ENCODE measurements at regions of chrX and their contacts with region 1.

Region 1: GRCh38 chrX:148024425-148025148 is 43.5 kb downstream of the FMR1NB start:
- DNase-seq: peak in 1 of 9 experiments; percentile 1
- ATAC-seq: no peak
- H3K4me3 ChIP-seq: no peak overlapping the region
- H3K4me3 Mint-ChIP-seq: no peak overlapping the region
- H3K27ac ChIP-seq: no peak overlapping the region
- H3K27ac Mint-ChIP-seq: no peak overlapping the region
- H3K4me1 ChIP-seq: no peaks in the 10 kb centered on the region
- H3K4me1 Mint-ChIP-seq: peaks cover 2% of the 10 kb centered on the region
- H3K27me3 ChIP-seq: no peaks in the 10 kb centered on the region
- H3K27me3 Mint-ChIP-seq: no peaks in the 10 kb centered on the region
- CTCF ChIP-seq: no peak

Region 2: DNA sequence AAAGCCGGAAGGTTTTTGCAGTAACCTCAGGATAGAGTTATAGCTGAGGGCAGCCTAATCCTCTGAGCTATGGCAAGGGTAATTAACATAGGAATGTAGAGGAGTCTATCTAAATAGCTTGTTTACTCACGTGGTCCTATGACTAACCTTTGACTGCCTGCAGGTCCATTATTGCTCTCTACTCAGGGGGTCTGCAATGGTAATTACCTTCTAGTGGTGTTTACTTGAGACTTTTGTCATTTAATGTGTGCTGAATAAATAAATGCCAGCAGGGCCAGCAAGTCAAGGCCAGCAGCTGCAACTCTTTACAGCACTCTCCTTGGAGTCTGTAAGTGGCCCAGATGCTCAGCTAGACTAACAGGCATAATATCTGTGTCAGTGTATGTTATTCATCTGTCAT is 325.5 kb before region 1 on chrX:
- CTCF ChIA-PET with region 1: no interaction called
- POLR2A ChIA-PET with region 1: no interaction called
- intact Hi-C with region 1: loop called in 1 of 2 experiments (anchors 10 kb)
- DNase-seq: no peak
- ATAC-seq: no peak
- H3K4me3 ChIP-seq: no peak overlapping the region
- H3K4me3 Mint-ChIP-seq: no peak overlapping the region
- H3K27ac ChIP-seq: no peak overlapping the region
- H3K27ac Mint-ChIP-seq: no peak overlapping the region
- H3K4me1 ChIP-seq: no peaks in the 10 kb centered on the region
- H3K4me1 Mint-ChIP-seq: no peaks in the 10 kb centered on the region
- H3K27me3 ChIP-seq: no peaks in the 10 kb centered on the region
- H3K27me3 Mint-ChIP-seq: no peaks in the 10 kb centered on the region
- CTCF ChIP-seq: no peak

Region 3: GRCh38 chrX:148080593-148080992 is 56.0 kb after region 1 on chrX:
- CTCF ChIA-PET with region 1: no interaction called
- POLR2A ChIA-PET with region 1: no interaction called
- intact Hi-C with region 1: loop called in 1 of 2 experiments (anchors 10 kb)
- DNase-seq: no peak
- ATAC-seq: no peak
- H3K4me3 ChIP-seq: no peak overlapping the region
- H3K4me3 Mint-ChIP-seq: no peak overlapping the region
- H3K27ac ChIP-seq: no peak overlapping the region
- H3K27ac Mint-ChIP-seq: no peak overlapping the region
- H3K4me1 ChIP-seq: no peaks in the 10 kb centered on the region
- H3K4me1 Mint-ChIP-seq: no peaks in the 10 kb centered on the region
- H3K27me3 ChIP-seq: no peaks in the 10 kb centered on the region
- H3K27me3 Mint-ChIP-seq: no peaks in the 10 kb centered on the region
- CTCF ChIP-seq: no peak

Region 4: DNA sequence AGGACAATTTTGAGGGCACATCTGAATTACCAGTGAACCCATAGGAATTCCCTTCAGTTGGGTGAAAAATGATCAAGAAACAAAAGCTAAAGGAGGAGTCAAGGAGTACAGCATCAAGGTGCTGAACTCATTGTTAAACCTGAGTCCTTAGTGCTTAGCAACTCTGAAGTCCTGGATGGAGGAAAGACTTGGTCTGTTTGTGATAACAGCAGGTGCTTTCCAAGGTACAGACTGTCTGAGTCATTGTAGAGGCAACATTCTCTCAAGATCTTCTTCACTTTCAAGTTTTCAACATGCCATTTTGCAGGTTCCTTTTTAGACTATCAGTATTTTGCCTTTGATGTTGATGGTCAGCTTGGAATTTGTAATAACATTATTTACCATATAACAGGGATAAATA is 769.8 kb after region 1 on chrX:
- CTCF ChIA-PET with region 1: no interaction called
- POLR2A ChIA-PET with region 1: no interaction called
- intact Hi-C with region 1: no loop called
- DNase-seq: no peak
- ATAC-seq: no peak
- H3K4me3 ChIP-seq: no peak overlapping the region
- H3K4me3 Mint-ChIP-seq: no peak overlapping the region
- H3K27ac ChIP-seq: no peak overlapping the region
- H3K27ac Mint-ChIP-seq: no peak overlapping the region
- H3K4me1 ChIP-seq: no peaks in the 10 kb centered on the region
- H3K4me1 Mint-ChIP-seq: no peaks in the 10 kb centered on the region
- H3K27me3 ChIP-seq: no peaks in the 10 kb centered on the region
- H3K27me3 Mint-ChIP-seq: no peaks in the 10 kb centered on the region
- CTCF ChIP-seq: no peak